ENCODE measurements at regions of chr19 and their contacts with region 1.

Region 1: DNA sequence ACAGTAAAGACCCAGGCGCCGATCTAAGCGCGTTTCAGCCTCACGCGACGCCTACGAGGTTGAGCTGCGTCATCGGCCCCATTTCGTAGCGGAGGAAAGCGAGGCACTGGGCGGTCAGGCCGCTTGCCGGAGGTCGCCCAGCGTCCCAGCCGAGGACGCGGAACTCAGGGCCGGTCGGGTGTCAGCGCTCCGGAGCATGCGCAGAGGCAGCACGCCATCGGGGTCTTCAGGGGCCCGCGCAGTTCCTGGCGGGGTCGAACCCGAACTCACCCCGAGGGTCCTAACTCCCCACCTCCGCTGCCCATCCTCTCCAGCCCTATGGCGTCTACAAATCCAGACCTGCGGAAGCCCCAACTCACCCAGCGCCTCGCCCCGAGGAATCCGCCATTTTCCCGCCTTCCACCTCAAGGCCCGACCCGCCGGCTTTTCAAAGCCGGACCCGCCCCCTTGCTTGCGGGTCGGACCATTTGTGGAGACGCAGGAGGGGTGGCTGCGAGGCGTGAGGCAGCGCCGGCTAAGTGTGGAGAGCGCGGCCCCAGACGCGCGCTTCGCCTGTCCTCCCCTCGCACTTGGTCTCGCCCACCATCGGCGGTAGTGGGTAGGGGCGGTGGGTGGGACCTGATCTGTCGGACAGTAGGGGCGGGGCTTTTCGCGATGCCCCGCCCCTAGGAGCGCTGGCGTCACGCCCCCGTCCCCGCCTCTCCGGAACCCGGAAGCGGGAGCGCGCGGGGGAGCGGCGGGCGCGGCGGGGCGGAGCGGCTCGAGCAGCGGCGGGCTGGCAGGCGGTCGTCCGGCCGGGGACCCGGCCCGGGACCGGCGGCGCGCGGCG is at the starts of genes HAUS8 and MYO9B:
- DNase-seq: peak; percentile 99 to 100 (median 100)
- H3K4me3 ChIP-seq: peak within 1 kb of the TSS; percentile 91 to 93
- H3K4me3 Mint-ChIP-seq: peak within 1 kb of the TSS; percentile 96 to 100 (median 98)
- H3K27ac ChIP-seq: peak within 1 kb of the TSS; percentile 77
- H3K27ac Mint-ChIP-seq: peak within 1 kb of the TSS; percentile 89 to 99 (median 98)
- H3K4me1 ChIP-seq: peaks cover 56% of the 10 kb centered on the region
- H3K4me1 Mint-ChIP-seq: peaks cover 41 to 79% (median 53%) of the 10 kb centered on the region in 4 donors
- H3K27me3 ChIP-seq: no peaks in the 10 kb centered on the region
- H3K27me3 Mint-ChIP-seq: no peaks in the 10 kb centered on the region
- total RNA-seq, gene HAUS8: 20.0 to 20.9 TPM
- total RNA-seq, gene MYO9B: 176 to 181 TPM

Region 2: DNA sequence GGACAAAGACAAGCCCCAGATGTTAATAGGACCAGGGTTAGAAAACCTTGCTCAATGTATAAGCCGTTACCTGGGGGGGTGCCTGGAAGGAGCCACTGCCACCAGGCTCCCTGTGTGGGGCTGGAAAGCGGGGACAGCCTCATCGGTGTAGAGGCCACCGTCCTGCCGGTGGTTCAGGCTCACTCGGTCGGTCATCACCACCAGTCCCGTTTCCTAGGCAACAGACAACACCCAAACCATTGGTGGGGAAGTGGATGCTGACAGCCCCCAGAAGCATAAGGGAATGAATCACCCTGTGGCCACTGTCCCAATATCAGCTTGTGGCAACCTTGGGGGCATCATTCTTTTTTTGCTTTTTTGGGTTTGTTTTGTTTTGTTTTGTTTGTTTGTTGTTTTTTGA is 104.4 kb before region 1 on chr19:
- CTCF ChIA-PET with region 1: no interaction called
- POLR2A ChIA-PET with region 1: no interaction called
- intact Hi-C with region 1: no loop called
- DNase-seq: no peak
- H3K4me3 ChIP-seq: no peak overlapping the region
- H3K4me3 Mint-ChIP-seq: no peak overlapping the region
- H3K27ac ChIP-seq: no peak overlapping the region
- H3K27ac Mint-ChIP-seq: no peak overlapping the region
- H3K4me1 ChIP-seq: no peaks in the 10 kb centered on the region
- H3K4me1 Mint-ChIP-seq: no peaks in the 10 kb centered on the region
- H3K27me3 ChIP-seq: no peaks in the 10 kb centered on the region
- H3K27me3 Mint-ChIP-seq: no peaks in the 10 kb centered on the region

Region 3: GRCh38 chr19:16998635-16999194 is 76.5 kb before region 1 on chr19:
- CTCF ChIA-PET with region 1: no interaction called
- POLR2A ChIA-PET with region 1: no interaction called
- intact Hi-C with region 1: no loop called
- DNase-seq: no peak
- H3K4me3 ChIP-seq: no peak overlapping the region
- H3K4me3 Mint-ChIP-seq: no peak overlapping the region
- H3K27ac ChIP-seq: no peak overlapping the region
- H3K27ac Mint-ChIP-seq: peak overlapping the region in 4 of 7 donors; percentile 26 to 81 (median 75)
- H3K4me1 ChIP-seq: peaks cover 28% of the 10 kb centered on the region
- H3K4me1 Mint-ChIP-seq: peaks cover 17 to 33% (median 22%) of the 10 kb centered on the region in 4 donors
- H3K27me3 ChIP-seq: no peaks in the 10 kb centered on the region
- H3K27me3 Mint-ChIP-seq: no peaks in the 10 kb centered on the region

Region 4: DNA sequence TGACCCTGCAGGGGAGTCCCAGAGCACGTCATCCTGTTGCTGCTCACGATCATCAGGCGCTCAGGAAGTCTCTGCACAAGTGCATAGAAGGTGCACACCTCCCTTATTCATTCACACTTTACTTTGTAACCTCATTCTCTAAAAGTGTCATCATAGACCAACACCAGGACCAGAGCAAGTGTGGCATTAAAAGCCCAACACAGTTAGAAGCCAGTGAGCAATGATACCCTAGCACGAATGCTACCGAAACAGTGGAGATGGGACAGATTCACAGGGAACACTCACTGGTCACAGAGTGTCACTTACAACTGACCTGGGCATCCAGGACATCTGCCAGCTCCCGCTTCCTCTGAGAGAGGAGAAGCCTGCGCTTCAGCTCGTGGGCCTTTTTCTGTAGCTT is 17.0 kb before region 1 on chr19:
- CTCF ChIA-PET with region 1: no interaction called
- POLR2A ChIA-PET with region 1: no interaction called
- intact Hi-C with region 1: no loop called
- DNase-seq: no peak
- H3K4me3 ChIP-seq: no peak overlapping the region
- H3K4me3 Mint-ChIP-seq: no peak overlapping the region
- H3K27ac ChIP-seq: no peak overlapping the region
- H3K27ac Mint-ChIP-seq: no peak overlapping the region
- H3K4me1 ChIP-seq: no peaks in the 10 kb centered on the region
- H3K4me1 Mint-ChIP-seq: peaks cover 1 to 6% (median 3%) of the 10 kb centered on the region in 4 donors
- H3K27me3 ChIP-seq: no peaks in the 10 kb centered on the region
- H3K27me3 Mint-ChIP-seq: no peaks in the 10 kb centered on the region

Region 5: GRCh38 chr19:17183858-17184321 is 108.6 kb after region 1 on chr19:
- CTCF ChIA-PET with region 1: interaction called, 4 read pairs
- POLR2A ChIA-PET with region 1: interaction called, 23 read pairs
- intact Hi-C with region 1: no loop called
- DNase-seq: peak in 4 of 5 donors; percentile 24 to 35 (median 31)
- H3K4me3 ChIP-seq: peak overlapping the region; percentile 5 to 43
- H3K4me3 Mint-ChIP-seq: peak overlapping the region; percentile 86 to 92 (median 90)
- H3K27ac ChIP-seq: peak overlapping the region; percentile 58
- H3K27ac Mint-ChIP-seq: peak overlapping the region; percentile 82 to 98 (median 96)
- H3K4me1 ChIP-seq: peaks cover 22% of the 10 kb centered on the region
- H3K4me1 Mint-ChIP-seq: peaks cover 16 to 27% (median 19%) of the 10 kb centered on the region in 4 donors
- H3K27me3 ChIP-seq: no peaks in the 10 kb centered on the region
- H3K27me3 Mint-ChIP-seq: no peaks in the 10 kb centered on the region

Region 6: GRCh38 chr19:17226002-17226933 is 151.0 kb after region 1 on chr19 and contains the start of gene OCEL1:
- CTCF ChIA-PET with region 1: interaction called, 3 read pairs
- POLR2A ChIA-PET with region 1: interaction called, 11 read pairs
- intact Hi-C with region 1: loop called (anchors 1 kb)
- DNase-seq: peak; percentile 96 to 98 (median 97)
- H3K4me3 ChIP-seq: peak within 1 kb of the TSS; percentile 73 to 90
- H3K4me3 Mint-ChIP-seq: peak within 1 kb of the TSS; percentile 95 to 99 (median 95)
- H3K27ac ChIP-seq: peak within 1 kb of the TSS; percentile 73
- H3K27ac Mint-ChIP-seq: peak within 1 kb of the TSS; percentile 98 to 99 (median 98)
- H3K4me1 ChIP-seq: peaks cover 14% of the 10 kb centered on the region
- H3K4me1 Mint-ChIP-seq: peaks cover 4 to 19% (median 7%) of the 10 kb centered on the region in 4 donors
- H3K27me3 ChIP-seq: no peaks in the 10 kb centered on the region
- H3K27me3 Mint-ChIP-seq: no peaks in the 10 kb centered on the region
- total RNA-seq, gene OCEL1: 23.9 to 29.3 TPM

Region 7: GRCh38 chr19:17282488-17283255 is 207.4 kb after region 1 on chr19:
- CTCF ChIA-PET with region 1: interaction called, 64 read pairs
- POLR2A ChIA-PET with region 1: no interaction called
- intact Hi-C with region 1: loop called (anchors 2 kb)
- DNase-seq: peak; percentile 72 to 79 (median 74)
- H3K4me3 ChIP-seq: peak overlapping the region; percentile 17 to 45
- H3K4me3 Mint-ChIP-seq: peak overlapping the region; percentile 73 to 86 (median 80)
- H3K27ac ChIP-seq: no peak overlapping the region
- H3K27ac Mint-ChIP-seq: peak overlapping the region in 2 of 7 donors; percentile 24 to 42
- H3K4me1 ChIP-seq: peaks cover 17% of the 10 kb centered on the region
- H3K4me1 Mint-ChIP-seq: peaks cover 2 to 4% (median 3%) of the 10 kb centered on the region in 4 donors
- H3K27me3 ChIP-seq: no peaks in the 10 kb centered on the region
- H3K27me3 Mint-ChIP-seq: no peaks in the 10 kb centered on the region

Measured in CD4-positive, alpha-beta memory T cell (primary cell).